Ovary (tissue), 10 donors: ENCODE measurements at regions of chr2 and their contacts with region 1.

Region 1: GRCh38 chr2:47178341-47178740 is 23.2 kb upstream of the STPG4 start:
- DNase-seq: no peak
- H3K4me3 ChIP-seq: no peak overlapping the region
- H3K27ac ChIP-seq: no peak overlapping the region
- H3K4me1 ChIP-seq: no peaks in the 10 kb centered on the region
- H3K27me3 ChIP-seq: no peaks in the 10 kb centered on the region
- CTCF ChIP-seq: no peak
- EP300 ChIP-seq: no peak
- POLR2A ChIP-seq: no peak

Region 2: DNA sequence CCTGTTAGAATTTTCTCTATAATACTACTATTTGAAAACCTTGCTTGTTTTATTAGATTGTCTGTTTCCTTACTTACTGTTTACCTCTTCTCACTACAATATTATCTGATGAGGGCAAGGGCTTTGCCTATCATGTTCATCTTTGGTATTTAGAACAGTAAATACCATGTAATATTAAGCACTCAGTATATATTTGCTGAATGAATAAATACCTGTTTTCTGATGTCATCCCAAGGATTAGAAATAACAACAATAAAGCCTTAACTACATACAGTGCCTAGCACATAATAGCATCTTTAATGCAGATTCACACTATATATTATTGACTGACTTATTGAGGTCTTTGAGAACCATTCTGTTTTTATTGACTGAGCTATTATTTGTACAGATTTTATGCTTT is 556.8 kb before region 1 on chr2:
- intact Hi-C with region 1: no loop called
- DNase-seq: no peak
- H3K4me3 ChIP-seq: no peak overlapping the region
- H3K27ac ChIP-seq: no peak overlapping the region
- H3K4me1 ChIP-seq: peaks cover 3% of the 10 kb centered on the region
- H3K27me3 ChIP-seq: no peaks in the 10 kb centered on the region
- CTCF ChIP-seq: no peak
- EP300 ChIP-seq: no peak
- POLR2A ChIP-seq: no peak

Region 3: DNA sequence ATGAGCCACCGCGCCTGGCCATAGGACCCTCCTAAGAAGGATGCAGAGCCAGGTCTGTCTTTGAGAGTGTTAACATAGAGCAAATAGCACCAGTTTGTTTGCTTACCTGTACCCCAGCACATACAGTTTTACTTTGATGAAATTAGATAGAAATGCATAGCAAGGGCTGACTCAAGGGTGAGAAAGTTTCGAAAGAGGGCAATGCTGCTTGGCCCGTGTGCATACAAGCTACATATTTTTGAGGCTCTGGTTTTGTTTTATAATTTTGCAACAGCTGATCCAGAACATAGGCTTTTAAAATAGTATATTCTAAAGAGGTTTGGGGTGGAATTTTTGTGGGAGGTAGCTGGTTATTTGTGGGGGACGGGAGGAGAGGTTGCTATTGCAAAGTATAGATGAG is 414.5 kb before region 1 on chr2:
- intact Hi-C with region 1: no loop called
- DNase-seq: no peak
- H3K4me3 ChIP-seq: no peak overlapping the region
- H3K27ac ChIP-seq: peak overlapping the region in 1 of 2 donors; percentile 15
- H3K4me1 ChIP-seq: peaks cover 3% of the 10 kb centered on the region
- H3K27me3 ChIP-seq: no peaks in the 10 kb centered on the region
- CTCF ChIP-seq: no peak
- EP300 ChIP-seq: no peak
- POLR2A ChIP-seq: no peak

Region 4: DNA sequence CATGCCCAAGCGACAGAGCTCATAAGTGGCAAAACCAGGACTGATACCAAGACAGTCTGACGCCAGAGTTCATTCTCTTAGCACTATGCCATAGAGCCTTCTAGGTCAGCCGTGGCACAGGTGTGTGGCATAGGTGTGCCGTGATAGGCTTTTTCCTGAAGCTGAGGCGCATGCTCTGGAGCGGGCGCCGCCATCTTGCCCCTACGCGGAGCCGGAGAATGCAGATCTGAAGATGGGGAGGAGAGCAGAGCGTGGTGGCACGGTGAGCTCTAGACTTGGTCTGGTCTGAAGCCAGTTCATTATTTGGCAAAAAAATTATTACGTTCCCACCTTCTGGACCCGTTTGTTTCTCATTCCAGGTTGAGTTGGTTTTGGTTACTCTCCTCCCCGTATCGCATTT is 279.3 kb before region 1 on chr2:
- intact Hi-C with region 1: no loop called
- DNase-seq: no peak
- H3K4me3 ChIP-seq: no peak overlapping the region
- H3K27ac ChIP-seq: no peak overlapping the region
- H3K4me1 ChIP-seq: no peaks in the 10 kb centered on the region
- H3K27me3 ChIP-seq: no peaks in the 10 kb centered on the region
- CTCF ChIP-seq: no peak
- EP300 ChIP-seq: no peak
- POLR2A ChIP-seq: no peak

Region 5: GRCh38 chr2:47189635-47190034 is 11.3 kb after region 1 on chr2:
- intact Hi-C with region 1: loop called in 1 of 4 experiments (anchors 1 kb)
- DNase-seq: no peak
- H3K4me3 ChIP-seq: no peak overlapping the region
- H3K27ac ChIP-seq: no peak overlapping the region
- H3K4me1 ChIP-seq: peaks cover 8% of the 10 kb centered on the region
- H3K27me3 ChIP-seq: no peaks in the 10 kb centered on the region
- CTCF ChIP-seq: no peak
- EP300 ChIP-seq: no peak
- POLR2A ChIP-seq: no peak

Region 6: DNA sequence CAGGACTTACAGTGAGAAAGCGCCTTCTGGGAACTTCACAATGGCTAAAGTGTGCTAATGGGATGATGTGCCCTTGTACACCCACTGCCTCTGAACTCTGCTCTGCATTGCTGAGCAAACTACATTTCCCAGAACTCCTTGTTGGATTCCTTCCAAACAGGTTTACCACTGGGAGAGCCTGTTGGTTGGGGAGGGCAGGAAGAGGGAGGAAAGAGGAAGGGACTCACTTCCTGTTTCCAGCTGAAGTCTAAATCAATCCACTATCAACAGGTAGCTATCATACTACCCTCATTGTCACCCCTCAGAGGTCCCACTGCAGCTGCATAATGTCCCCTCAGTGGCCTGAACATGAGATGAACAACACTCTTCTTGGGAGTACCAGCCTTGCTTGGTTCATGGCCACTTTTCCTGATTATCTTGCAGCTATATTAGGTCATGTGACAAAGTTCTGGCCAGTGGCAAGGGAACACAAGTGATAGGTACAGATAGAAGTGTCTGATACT is 334.3 kb after region 1 on chr2:
- intact Hi-C with region 1: no loop called
- DNase-seq: no peak
- H3K4me3 ChIP-seq: no peak overlapping the region
- H3K27ac ChIP-seq: no peak overlapping the region
- H3K4me1 ChIP-seq: no peaks in the 10 kb centered on the region
- H3K27me3 ChIP-seq: no peaks in the 10 kb centered on the region
- CTCF ChIP-seq: no peak
- EP300 ChIP-seq: no peak
- POLR2A ChIP-seq: no peak